Transverse colon (tissue), 4 donors: ENCODE measurements at regions of chr3 and their contacts with region 1.

Region 1: DNA sequence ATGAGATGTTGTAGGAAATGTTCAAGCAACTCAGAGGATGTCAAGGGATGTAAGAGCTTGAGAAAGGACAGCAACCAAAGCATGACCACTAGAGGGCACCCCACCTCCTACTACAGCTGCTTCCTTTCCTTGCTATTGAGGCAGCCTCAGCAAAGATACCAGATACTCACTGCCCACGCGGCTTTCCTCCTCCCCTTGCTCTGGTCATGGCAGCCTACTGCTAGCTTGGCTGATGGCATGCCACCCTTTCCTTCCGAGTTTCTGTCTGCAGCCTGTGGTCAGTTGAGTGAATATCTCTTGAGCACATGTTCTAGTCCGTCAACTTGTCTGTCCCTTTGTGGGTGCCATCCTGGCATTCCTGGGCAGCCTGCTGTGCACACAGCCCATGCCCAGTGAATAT is 4.4 kb upstream of the CXCR6 start:
- DNase-seq: peak; percentile 88
- H3K4me3 ChIP-seq: no peak overlapping the region
- H3K27ac ChIP-seq: peak overlapping the region in 1 of 4 donors; percentile 24
- H3K4me1 ChIP-seq: peaks cover 0 to 8% (median 4%) of the 10 kb centered on the region in 4 donors
- H3K27me3 ChIP-seq: no peaks in the 10 kb centered on the region
- CTCF ChIP-seq: peak; percentile 84 to 91 (median 87)
- EP300 ChIP-seq: no peak
- POLR2A ChIP-seq: no peak

Region 2: DNA sequence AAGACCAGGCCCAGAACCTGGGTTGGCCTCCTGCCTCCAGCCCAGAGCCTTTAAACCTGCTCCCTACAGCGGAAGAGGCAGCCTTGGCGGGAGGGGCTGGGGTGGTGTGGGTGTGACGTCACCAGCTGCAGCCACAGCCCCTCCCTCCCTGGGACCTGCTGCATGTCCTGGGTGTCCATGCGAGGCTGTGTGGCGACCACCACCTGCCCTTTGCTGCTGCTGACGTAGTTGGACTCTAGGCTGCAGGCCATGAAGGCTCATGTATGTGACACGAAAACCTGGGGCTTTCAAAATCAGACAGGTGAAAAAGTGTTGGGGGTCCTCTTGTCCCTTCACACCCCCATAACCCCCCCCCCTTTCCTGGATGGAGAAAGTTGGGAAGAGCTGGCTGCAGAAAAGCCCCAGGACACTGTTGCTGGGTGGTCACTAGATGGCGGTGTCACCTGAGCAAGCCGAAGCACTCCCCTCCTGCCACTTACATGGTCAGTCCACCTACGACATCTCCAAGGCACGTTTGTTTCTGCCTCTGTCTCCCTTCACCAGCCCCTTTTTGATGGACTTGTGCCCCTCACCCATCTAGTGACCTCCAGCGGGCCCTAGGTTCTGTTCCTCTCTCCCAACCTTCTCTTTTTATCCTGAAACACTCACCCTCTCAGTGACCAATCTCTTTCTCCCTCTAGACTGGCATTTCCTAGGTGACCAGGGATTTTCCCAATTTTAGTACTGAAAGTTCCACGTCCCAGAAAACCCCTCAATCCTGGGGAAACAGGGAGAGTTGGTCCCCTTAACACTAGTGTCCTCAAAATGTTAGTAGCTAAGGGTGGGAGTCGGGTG is 177.8 kb before region 1 on chr3:
- in situ Hi-C with region 1: no loop called
- intact Hi-C with region 1: loop called (anchors 10 kb)
- DNase-seq: peak; percentile 58
- H3K4me3 ChIP-seq: no peak overlapping the region
- H3K27ac ChIP-seq: no peak overlapping the region
- H3K4me1 ChIP-seq: peaks cover 0 to 3% (median 0%) of the 10 kb centered on the region in 4 donors
- H3K27me3 ChIP-seq: no peaks in the 10 kb centered on the region
- CTCF ChIP-seq: peak; percentile 65 to 82 (median 77)
- EP300 ChIP-seq: no peak
- POLR2A ChIP-seq: no peak

Region 3: DNA sequence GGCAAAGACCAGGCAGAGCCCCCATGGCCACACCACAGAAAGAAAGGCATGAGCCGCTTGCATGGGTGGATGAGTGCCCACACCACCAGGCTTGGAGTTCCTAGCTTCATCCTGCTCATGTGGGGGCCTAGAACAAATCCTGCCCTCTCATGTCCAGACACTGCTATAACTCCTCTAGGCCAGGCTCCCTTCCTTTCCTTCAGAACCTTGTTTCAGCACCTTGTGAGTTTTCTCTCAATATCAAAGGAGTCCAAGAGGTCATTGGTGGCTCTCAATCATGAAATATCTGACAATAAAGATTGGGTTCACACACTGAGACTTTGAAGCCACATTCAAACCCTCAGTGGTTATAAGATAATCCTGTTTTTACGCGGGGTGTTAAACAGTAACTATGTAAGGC is 155.2 kb before region 1 on chr3:
- in situ Hi-C with region 1: no loop called
- intact Hi-C with region 1: no loop called
- DNase-seq: no peak
- H3K4me3 ChIP-seq: no peak overlapping the region
- H3K27ac ChIP-seq: no peak overlapping the region
- H3K4me1 ChIP-seq: no peaks in the 10 kb centered on the region
- H3K27me3 ChIP-seq: no peaks in the 10 kb centered on the region
- CTCF ChIP-seq: no peak
- EP300 ChIP-seq: no peak
- POLR2A ChIP-seq: no peak

Region 4: GRCh38 chr3:46078712-46079400 is 140.0 kb after region 1 on chr3:
- in situ Hi-C with region 1: loop called (anchors 5 to 10 kb)
- intact Hi-C with region 1: loop called (anchors 2 kb)
- DNase-seq: peak; percentile 93
- H3K4me3 ChIP-seq: peak overlapping the region in 1 of 4 donors; percentile 27
- H3K27ac ChIP-seq: no peak overlapping the region
- H3K4me1 ChIP-seq: peaks cover 0 to 8% (median 0%) of the 10 kb centered on the region in 4 donors
- H3K27me3 ChIP-seq: no peaks in the 10 kb centered on the region
- CTCF ChIP-seq: peak; percentile 94 to 99 (median 97)
- EP300 ChIP-seq: no peak
- POLR2A ChIP-seq: no peak

Region 5: DNA sequence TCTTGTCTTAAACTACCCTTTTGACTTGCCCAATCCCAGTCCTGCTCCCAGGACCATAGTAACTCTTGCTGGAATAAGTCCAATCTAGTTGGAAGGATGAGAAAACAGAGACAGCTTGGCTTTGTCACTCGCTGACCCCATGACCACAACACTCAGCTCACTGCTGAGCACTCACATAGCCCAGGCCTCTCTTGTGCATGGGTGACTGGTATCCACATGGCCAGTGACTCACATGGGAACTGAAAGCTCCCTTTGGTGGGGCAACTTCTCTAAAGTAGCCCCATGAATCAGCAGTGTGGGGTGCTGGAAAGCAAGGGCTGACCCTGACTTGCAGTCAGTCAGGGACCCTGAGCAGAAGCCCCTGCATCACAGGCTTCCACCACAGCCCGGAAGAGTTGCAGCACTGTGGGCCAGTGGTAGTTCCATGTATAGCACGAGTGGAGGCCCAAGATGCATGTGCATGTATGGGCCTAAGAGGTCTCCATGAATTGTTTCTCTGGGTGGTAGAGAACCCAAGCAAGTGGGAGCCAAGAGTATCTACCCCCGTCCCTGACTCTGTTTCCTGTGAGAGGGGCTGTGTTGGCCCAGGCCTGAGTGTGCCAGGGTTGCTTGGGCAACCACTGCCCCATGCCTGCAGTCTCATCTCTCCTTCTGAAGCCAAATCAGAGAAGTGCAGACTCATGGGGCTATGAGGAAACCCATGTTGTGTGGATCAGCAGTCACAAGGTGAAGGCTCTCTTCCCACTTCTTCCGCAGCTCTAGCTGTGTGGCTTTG is 150.6 kb after region 1 on chr3:
- in situ Hi-C with region 1: loop called in 1 of 4 experiments (anchors 10 kb)
- intact Hi-C with region 1: no loop called
- DNase-seq: peak; percentile 58
- H3K4me3 ChIP-seq: no peak overlapping the region
- H3K27ac ChIP-seq: peak overlapping the region; percentile 37 to 48 (median 42)
- H3K4me1 ChIP-seq: peaks cover 0 to 15% (median 1%) of the 10 kb centered on the region in 4 donors
- H3K27me3 ChIP-seq: no peaks in the 10 kb centered on the region
- CTCF ChIP-seq: no peak
- EP300 ChIP-seq: peak; percentile 15
- POLR2A ChIP-seq: no peak

Region 6: GRCh38 chr3:46208167-46208704 is 269.4 kb after region 1 on chr3 and contains the start of gene CCR1:
- in situ Hi-C with region 1: loop called in 2 of 4 experiments (anchors 25 kb)
- intact Hi-C with region 1: no loop called
- DNase-seq: peak; percentile 57
- H3K4me3 ChIP-seq: peak within 1 kb of the TSS in 1 of 4 donors; percentile 33
- H3K27ac ChIP-seq: peak within 1 kb of the TSS; percentile 17 to 59 (median 38)
- H3K4me1 ChIP-seq: no peaks in the 10 kb centered on the region
- H3K27me3 ChIP-seq: no peaks in the 10 kb centered on the region
- CTCF ChIP-seq: peak; percentile 12 to 43 (median 30)
- EP300 ChIP-seq: no peak
- POLR2A ChIP-seq: no peak
- total RNA-seq, gene CCR1: 1.9 to 4.4 (median 3.3) TPM in 3 of 4 donors, not detected in the other

Region 7: DNA sequence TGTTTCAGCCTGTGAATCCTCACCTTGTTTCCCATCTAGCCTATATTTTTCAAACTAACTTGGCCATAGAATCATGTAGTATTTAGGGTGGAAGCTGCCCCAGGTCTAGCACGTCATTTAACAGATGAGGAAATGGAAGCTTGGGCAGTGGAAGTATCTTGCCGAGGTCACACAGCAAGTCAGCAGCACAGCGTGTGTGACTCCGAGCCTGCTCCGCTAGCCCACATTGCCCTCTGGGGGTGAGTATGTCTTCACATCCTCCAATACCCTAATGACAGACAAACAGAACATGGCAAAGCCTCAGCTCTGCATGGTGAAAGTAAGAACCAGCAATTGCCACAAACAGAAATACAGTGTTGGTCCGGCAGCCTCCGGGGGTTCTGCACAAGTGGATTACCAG is 429.7 kb after region 1 on chr3:
- in situ Hi-C with region 1: loop called in 2 of 4 experiments (anchors 10 to 25 kb)
- intact Hi-C with region 1: no loop called
- DNase-seq: peak; percentile 77
- H3K4me3 ChIP-seq: no peak overlapping the region
- H3K27ac ChIP-seq: peak overlapping the region in 3 of 4 donors; percentile 17 to 56 (median 36)
- H3K4me1 ChIP-seq: no peaks in the 10 kb centered on the region
- H3K27me3 ChIP-seq: no peaks in the 10 kb centered on the region
- CTCF ChIP-seq: peak in 3 of 5 experiments; percentile 18 to 33 (median 24)
- EP300 ChIP-seq: no peak
- POLR2A ChIP-seq: no peak

Region 8: GRCh38 chr3:46378426-46378942 is 439.6 kb after region 1 on chr3:
- in situ Hi-C with region 1: loop called in 2 of 4 experiments (anchors 25 kb)
- intact Hi-C with region 1: no loop called
- DNase-seq: peak; percentile 76
- H3K4me3 ChIP-seq: no peak overlapping the region
- H3K27ac ChIP-seq: no peak overlapping the region
- H3K4me1 ChIP-seq: peaks cover 0 to 22% (median 8%) of the 10 kb centered on the region in 4 donors
- H3K27me3 ChIP-seq: no peaks in the 10 kb centered on the region
- CTCF ChIP-seq: peak; percentile 46 to 61 (median 58)
- EP300 ChIP-seq: no peak
- POLR2A ChIP-seq: no peak